A673 (cell line): ENCODE measurements at regions of chr1 and their contacts with region 1.

Region 1: GRCh38 chr1:158706096-158706495 is 5.6 kb upstream of the OR6K2 start:
- DNase-seq: no peak
- H3K4me3 ChIP-seq: no peak overlapping the region
- H3K27ac ChIP-seq: no peak overlapping the region
- H3K4me1 ChIP-seq: no peaks in the 10 kb centered on the region
- H3K27me3 ChIP-seq: peaks cover 6% of the 10 kb centered on the region
- CTCF ChIP-seq: no peak

Region 2: DNA sequence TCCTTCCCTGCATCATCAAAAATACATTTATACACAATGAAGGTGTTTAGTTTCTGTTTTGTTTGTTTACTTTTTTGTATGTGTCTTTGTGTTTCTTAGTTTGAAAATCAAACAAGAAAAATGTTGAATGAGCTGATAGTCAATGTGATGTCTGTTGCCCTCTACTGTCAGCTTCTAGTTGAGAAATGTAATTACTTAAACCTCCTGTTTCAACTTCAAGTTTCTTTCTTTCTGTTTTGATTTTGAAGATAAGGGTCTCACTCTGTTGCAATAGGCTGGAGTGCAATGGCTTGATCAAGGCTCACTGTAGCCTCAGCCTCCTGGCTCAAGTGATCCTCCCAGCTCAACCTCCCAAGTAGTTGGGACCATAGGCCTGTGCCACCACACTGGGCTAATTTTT is 57.0 kb before region 1 on chr1:
- CTCF ChIA-PET with region 1: no interaction called
- POLR2A ChIA-PET with region 1: no interaction called
- intact Hi-C with region 1: loop called (anchors 10 kb)
- DNase-seq: no peak
- H3K4me3 ChIP-seq: no peak overlapping the region
- H3K27ac ChIP-seq: no peak overlapping the region
- H3K4me1 ChIP-seq: no peaks in the 10 kb centered on the region
- H3K27me3 ChIP-seq: peaks cover 10% of the 10 kb centered on the region
- CTCF ChIP-seq: no peak